A549 (cell line): ENCODE measurements at regions of chr6 and their contacts with region 1.

Region 1: GRCh38 chr6:10411971-10412745 is 2.7 kb downstream of the TFAP2A start:
- DNase-seq: peak; percentile 56 to 92
- ATAC-seq: peak; percentile 46 to 66
- H3K4me3 ChIP-seq: peak overlapping the region; percentile 52
- H3K27ac ChIP-seq: peak overlapping the region; percentile 96 to 98
- H3K4me1 ChIP-seq: peaks cover 10% of the 10 kb centered on the region; the same call in 2 of the 3 replicates
- CTCF ChIP-seq: no peak
- EP300 ChIP-seq: peak in 1 of 2 experiments; percentile 22; a peak in 1 of 5 replicates
- POLR2A ChIP-seq: peak; percentile 56
- RAD21 ChIP-seq: no peak; a peak in 1 of 5 replicates

Region 2: DNA sequence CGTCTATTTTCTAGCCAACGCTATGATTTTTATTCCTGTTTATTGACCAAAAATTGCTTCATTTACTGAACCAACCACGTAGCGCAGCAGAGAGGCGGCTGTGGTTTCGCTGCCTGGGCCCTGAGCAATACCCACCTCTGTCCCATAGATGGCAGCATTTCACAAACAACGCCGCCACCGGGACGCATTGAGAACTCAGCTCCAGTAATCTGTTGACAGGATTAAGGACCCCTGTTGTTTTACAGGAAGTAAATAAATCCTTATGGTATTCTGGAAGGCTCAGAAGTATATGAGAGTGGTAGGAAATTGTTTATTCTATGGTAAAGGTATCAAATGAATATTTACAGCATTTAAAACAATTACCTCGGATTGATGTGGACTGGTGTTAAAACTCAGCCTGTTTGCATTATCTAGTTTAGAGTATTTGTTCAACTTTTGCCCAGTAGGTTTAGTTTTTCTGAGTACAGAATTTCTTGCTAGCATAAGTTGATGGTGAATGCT is 1428.9 kb before region 1 on chr6:
- CTCF ChIA-PET with region 1: interaction called, 32 read pairs
- POLR2A ChIA-PET with region 1: interaction called, 3 read pairs
- DNase-seq: peak; percentile 27 to 55
- ATAC-seq: peak; percentile 92 to 96
- H3K4me3 ChIP-seq: no peak overlapping the region
- H3K27ac ChIP-seq: no peak overlapping the region
- H3K4me1 ChIP-seq: peaks cover 7% of the 10 kb centered on the region; the same call in 1 of the 3 replicates
- CTCF ChIP-seq: peak; percentile 80
- EP300 ChIP-seq: no peak
- POLR2A ChIP-seq: no peak
- RAD21 ChIP-seq: peak; percentile 89 to 90

Region 3: DNA sequence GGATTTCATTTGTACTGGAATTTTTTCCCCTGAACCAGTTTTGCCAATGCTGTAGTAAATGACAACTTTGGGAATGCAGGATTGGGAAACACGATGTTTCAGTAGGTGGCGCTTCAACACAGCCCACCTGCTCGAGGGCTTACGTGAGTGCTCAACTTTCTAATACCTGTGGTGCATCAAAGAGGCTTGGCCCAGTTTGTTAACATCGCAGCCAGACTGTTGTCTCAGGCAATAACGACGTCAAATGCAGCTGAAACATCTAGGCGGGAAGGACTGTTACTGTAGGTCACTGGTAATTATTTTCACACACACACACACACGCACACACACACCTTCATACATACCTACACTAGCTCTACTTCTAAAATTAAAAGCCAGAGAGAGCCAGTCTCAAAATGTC is 1161.3 kb before region 1 on chr6:
- CTCF ChIA-PET with region 1: interaction called, 32 read pairs
- POLR2A ChIA-PET with region 1: no interaction called
- DNase-seq: peak in 1 of 2 experiments; percentile 64
- ATAC-seq: peak; percentile 77 to 80; a peak in 5 of 6 replicates
- H3K4me3 ChIP-seq: no peak overlapping the region
- H3K27ac ChIP-seq: no peak overlapping the region
- H3K4me1 ChIP-seq: peaks cover 11% of the 10 kb centered on the region; the same call in 2 of the 3 replicates
- CTCF ChIP-seq: peak; percentile 67
- EP300 ChIP-seq: no peak
- POLR2A ChIP-seq: no peak
- RAD21 ChIP-seq: peak; percentile 85 to 87

Region 4: DNA sequence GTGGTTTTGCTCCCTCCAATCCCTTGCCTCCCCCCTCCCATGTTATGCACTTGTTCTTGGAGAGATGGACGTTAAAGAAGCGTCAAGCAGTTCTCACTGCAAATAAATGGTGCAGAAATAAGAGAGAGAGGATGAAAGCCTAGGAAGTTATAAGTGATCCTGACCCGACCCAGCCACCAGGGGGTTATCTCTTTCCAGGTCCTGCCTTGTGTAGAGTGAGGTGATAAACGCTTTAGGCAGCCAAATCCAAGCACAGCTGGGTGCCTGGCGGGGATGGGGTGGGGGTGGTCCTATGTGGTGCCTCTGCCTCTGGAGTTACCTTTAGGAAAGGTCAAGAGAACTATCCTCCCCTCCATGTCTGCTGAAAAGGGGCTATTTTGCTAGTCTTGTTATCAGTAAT is 11.8 kb after region 1 on chr6:
- CTCF ChIA-PET with region 1: interaction called, 25 read pairs
- POLR2A ChIA-PET with region 1: interaction called, 5 read pairs
- DNase-seq: peak in 1 of 2 experiments; percentile 54
- ATAC-seq: peak; percentile 88 to 89
- H3K4me3 ChIP-seq: no peak overlapping the region
- H3K27ac ChIP-seq: peak overlapping the region; percentile 19 to 60; a peak in 3 of 6 replicates
- H3K4me1 ChIP-seq: peaks cover 24% of the 10 kb centered on the region
- CTCF ChIP-seq: no peak
- EP300 ChIP-seq: no peak
- POLR2A ChIP-seq: no peak
- RAD21 ChIP-seq: no peak

Region 5: DNA sequence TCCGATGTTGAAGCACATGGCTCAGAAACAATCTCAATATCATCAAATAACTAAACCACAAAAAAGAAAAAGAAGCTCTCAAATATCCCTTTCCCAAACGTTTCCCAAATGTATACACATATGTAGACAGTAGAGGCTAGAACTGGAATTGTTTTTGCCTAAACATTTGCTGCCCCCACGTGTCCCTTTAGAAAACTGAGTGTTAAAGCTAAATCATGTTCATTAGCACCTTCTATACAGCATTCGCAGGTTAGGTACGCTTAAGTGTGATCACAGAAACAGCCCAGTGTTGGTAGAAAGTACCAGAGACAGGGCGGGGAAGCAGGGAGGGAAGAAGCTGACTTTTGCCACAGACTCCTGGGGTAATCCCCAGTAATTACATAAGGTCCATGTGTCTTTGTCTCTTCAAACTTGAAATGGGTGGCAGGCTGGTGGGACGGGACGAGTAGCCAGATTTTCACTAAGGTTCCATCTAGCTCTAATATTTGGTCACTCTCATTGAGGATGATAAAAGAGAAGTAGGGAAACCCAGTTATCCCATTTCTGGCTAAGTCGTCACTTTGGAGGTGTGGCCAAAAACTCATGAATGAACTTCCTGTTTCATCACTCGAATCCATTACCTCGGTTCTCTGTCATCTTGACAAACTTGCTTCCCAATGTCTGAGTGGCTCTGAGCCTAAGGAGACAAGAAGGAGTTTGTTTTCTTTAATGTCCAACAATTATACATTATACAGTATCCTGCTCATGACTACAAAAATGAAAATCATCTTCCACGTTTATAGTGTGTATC is 17.7 kb after region 1 on chr6:
- CTCF ChIA-PET with region 1: interaction called, 25 read pairs
- POLR2A ChIA-PET with region 1: interaction called, 5 read pairs
- DNase-seq: peak in 1 of 2 experiments; percentile 64
- ATAC-seq: peak; percentile 77 to 85; a peak in 5 of 6 replicates
- H3K4me3 ChIP-seq: no peak overlapping the region
- H3K27ac ChIP-seq: peak overlapping the region; percentile 38 to 74; a peak in 4 of 6 replicates
- H3K4me1 ChIP-seq: peaks cover 33% of the 10 kb centered on the region
- CTCF ChIP-seq: peak; percentile 75
- EP300 ChIP-seq: no peak
- POLR2A ChIP-seq: no peak
- RAD21 ChIP-seq: peak; percentile 83 to 88

Region 6: DNA sequence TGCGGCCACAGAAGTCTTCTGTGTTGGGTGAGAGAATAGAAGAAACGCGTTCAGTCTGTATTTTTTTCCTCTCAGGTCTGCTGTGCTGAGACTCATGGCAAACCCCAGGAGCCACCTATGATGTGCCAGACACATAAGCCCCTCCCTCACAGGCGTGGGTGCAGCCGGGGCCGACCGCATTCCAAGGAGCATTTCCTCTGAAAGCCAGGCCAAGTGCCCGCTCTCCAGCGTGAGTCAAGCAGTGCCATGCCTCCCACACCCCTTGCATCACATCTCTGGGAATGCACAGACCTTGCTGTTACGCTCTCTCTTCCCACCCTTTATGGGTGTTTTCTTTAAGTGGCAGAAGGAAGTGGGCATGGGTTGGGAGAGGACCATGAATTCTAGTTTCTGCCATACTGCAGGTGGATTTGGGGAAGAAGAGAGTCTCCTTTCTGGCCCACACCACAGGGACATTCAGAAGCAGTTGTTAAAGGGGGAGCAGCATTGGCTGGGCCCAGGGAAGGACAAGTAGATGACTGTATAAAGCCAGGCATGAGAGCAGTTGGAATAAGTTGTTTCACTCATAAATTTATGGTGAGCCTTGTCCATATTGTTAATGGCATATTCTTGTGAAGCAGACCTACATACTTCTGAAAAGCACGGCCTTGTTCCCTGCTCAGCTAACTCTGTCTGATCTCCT is 39.8 kb after region 1 on chr6:
- CTCF ChIA-PET with region 1: no interaction called
- POLR2A ChIA-PET with region 1: interaction called, 10 read pairs
- DNase-seq: peak; percentile 81 to 98
- ATAC-seq: peak; percentile 98 to 100
- H3K4me3 ChIP-seq: no peak overlapping the region
- H3K27ac ChIP-seq: peak overlapping the region; percentile 88 to 99
- H3K4me1 ChIP-seq: peaks cover 35% of the 10 kb centered on the region
- CTCF ChIP-seq: no peak
- EP300 ChIP-seq: peak; percentile 66 to 82; a peak in 3 of 5 replicates
- POLR2A ChIP-seq: no peak
- RAD21 ChIP-seq: peak in 1 of 2 experiments; percentile 24; a peak in 1 of 5 replicates